ENCODE measurements at regions of chr5 and their contacts with region 1.

Region 1: DNA sequence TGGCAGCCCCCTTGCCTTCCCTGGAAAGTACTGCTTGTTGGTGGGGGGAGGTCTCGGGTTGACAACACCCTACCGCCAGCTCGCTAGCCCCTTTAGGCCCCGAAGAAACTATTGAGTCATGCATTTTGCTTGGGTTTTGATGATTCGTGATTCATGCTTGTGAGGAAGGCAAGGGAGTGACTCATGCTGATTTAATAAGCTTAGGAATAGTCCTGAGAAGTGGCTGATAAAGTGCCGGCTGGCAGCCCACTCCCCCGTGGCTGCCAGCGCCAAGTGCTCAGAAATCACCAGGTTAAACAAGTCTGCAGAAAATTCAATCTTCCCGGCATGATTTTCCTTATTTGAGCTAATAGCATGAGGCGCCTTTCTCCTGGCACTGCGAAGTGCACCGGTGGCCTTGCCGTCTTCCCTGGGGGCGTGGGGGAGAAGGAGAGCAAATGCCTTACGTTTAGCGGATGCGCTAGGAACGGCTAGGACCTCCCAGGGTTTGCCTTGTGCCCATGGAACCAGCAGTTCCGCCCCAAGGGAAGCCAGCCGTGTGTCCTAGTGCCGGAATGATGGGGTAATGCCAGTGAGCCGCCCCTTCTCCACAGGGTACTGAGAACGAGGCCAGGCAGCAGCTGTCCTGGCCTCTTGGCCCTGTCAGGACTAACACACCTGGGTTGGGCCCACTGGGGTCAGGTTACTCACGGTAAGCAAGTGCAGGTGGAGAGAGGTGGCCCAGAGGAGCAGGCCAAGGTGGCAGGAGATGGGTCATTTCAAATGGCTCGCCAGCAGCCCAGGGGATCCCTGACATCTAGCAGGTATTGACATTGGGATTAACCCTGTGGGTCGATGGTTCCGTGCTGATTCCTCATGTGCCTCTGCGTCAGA is 151.9 kb downstream of the MACROH2A1 start:
- DNase-seq: peak; percentile 90
- ATAC-seq: peak; percentile 75
- H3K4me3 ChIP-seq: peak overlapping the region; percentile 58
- H3K27ac ChIP-seq: peak overlapping the region; percentile 95
- H3K4me1 ChIP-seq: peaks cover 45% of the 10 kb centered on the region
- H3K27me3 ChIP-seq: no peaks in the 10 kb centered on the region
- CTCF ChIP-seq: no peak

Region 2: GRCh38 chr5:135208903-135209721 is 38.0 kb before region 1 on chr5:
- CTCF ChIA-PET with region 1: interaction called, 5 read pairs
- POLR2A ChIA-PET with region 1: no interaction called
- intact Hi-C with region 1: loop called (anchors 2 kb)
- DNase-seq: peak; percentile 87
- ATAC-seq: peak; percentile 98
- H3K4me3 ChIP-seq: no peak overlapping the region
- H3K27ac ChIP-seq: peak overlapping the region; percentile 39; the same call in 1 of the 2 replicates
- H3K4me1 ChIP-seq: peaks cover 21% of the 10 kb centered on the region
- H3K27me3 ChIP-seq: no peaks in the 10 kb centered on the region
- CTCF ChIP-seq: peak; percentile 55; the same call in 1 of the 2 replicates

Region 3: GRCh38 chr5:135319928-135320607 is 72.9 kb after region 1 on chr5:
- CTCF ChIA-PET with region 1: no interaction called
- POLR2A ChIA-PET with region 1: no interaction called
- intact Hi-C with region 1: loop called (anchors 5 kb)
- DNase-seq: no peak
- ATAC-seq: peak; percentile 43
- H3K4me3 ChIP-seq: no peak overlapping the region
- H3K27ac ChIP-seq: no peak overlapping the region
- H3K4me1 ChIP-seq: peaks cover 16% of the 10 kb centered on the region
- H3K27me3 ChIP-seq: no peaks in the 10 kb centered on the region
- CTCF ChIP-seq: peak; percentile 27; the same call in 1 of the 2 replicates